Common myeloid progenitor, CD34-positive (primary cell): ENCODE measurements at regions of chr13 and their contacts with region 1.

Region 1: DNA sequence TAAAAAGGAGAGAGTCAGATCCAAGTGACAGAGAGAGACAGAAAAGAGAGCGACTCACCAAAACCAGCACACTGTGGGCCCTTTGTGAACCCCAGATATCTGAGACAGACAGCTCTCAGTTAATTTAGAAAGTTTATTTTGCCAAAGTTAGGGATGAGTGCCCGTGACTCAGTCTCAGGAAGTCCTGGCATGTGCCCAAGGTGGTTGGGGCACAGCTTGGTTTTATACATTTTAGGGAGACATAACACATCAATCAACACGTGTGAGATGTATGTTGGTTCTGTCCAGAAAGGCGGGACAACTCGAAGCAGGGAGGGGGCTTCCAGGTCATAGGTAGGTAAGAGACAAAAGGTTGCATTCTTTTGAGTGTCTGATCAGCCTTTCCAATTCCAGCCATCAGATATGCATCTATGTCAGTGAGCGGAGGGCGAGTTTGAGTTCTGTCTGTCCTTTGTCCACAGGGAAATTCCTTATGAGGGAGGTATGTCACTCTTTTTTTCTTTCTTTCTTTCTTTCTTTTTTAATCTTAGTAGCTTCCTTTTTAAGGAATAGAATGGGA is 37.2 kb upstream of the ATP11A start:
- DNase-seq: no peak
- H3K4me3 ChIP-seq: no peak overlapping the region
- H3K27ac ChIP-seq: no peak overlapping the region
- H3K4me1 ChIP-seq: peaks cover 0 to 5% (median 1%) of the 10 kb centered on the region in 4 experiments
- H3K27me3 ChIP-seq: no peaks in the 10 kb centered on the region

Region 2: DNA sequence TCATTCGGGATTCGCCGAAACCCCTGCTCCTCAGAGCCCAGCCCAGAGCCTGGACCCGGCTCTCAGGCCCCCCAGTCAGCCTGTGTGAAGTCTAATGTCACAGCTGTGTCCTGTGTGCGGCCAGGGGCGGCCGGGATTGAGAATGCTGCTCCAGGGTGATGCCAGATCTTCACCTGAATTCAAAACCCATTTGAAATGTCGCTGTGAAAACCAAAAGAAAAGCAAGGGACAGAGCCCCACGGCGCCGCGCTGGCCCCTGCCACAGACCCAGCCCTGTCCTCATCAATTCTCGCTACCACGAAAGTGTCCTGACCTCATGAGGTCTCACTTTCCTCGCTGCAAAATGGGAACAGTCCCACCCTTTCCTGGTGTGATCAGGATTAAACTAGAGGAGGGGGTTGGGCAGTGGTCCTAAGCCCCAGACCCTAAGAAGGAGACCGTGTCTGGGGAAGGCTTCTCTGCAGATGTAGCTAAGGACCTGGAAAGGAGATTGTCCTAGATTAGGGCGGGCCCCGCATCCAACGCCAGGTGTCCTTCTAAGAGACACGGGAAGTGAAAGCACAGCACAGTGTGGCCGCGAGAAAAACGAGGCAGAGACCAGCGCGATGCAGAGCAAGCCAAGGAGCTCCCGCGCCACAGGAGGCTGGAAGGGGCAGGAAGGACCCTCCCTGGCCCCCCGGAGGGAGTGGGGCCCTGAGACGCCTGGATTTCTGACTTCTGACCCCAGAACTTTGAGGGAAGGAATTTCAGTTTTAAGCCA is 310.4 kb before region 1 on chr13:
- CTCF ChIA-PET with region 1: no interaction called
- POLR2A ChIA-PET with region 1: no interaction called
- DNase-seq: no peak
- H3K4me3 ChIP-seq: no peak overlapping the region
- H3K27ac ChIP-seq: no peak overlapping the region
- H3K4me1 ChIP-seq: no peaks in the 10 kb centered on the region
- H3K27me3 ChIP-seq: peaks cover 11 to 55% (median 19%) of the 10 kb centered on the region in 5 experiments

Region 3: GRCh38 chr13:112638157-112638750 is 14.3 kb before region 1 on chr13:
- CTCF ChIA-PET with region 1: interaction called, 20 read pairs
- POLR2A ChIA-PET with region 1: no interaction called
- DNase-seq: no peak
- H3K4me3 ChIP-seq: peak overlapping the region in 1 of 7 experiments; percentile 36
- H3K27ac ChIP-seq: no peak overlapping the region
- H3K4me1 ChIP-seq: peaks cover 0 to 18% (median 6%) of the 10 kb centered on the region in 4 experiments
- H3K27me3 ChIP-seq: peaks cover 0 to 44% (median 18%) of the 10 kb centered on the region in 5 experiments

Region 4: GRCh38 chr13:112669881-112670499 is 17.4 kb after region 1 on chr13:
- CTCF ChIA-PET with region 1: no interaction called
- POLR2A ChIA-PET with region 1: no interaction called
- DNase-seq: no peak
- H3K4me3 ChIP-seq: no peak overlapping the region
- H3K27ac ChIP-seq: no peak overlapping the region
- H3K4me1 ChIP-seq: peaks cover 0 to 9% (median 6%) of the 10 kb centered on the region in 4 experiments
- H3K27me3 ChIP-seq: peaks cover 0 to 6% (median 0%) of the 10 kb centered on the region in 5 experiments